Breast epithelium (tissue), 4 donors: ENCODE measurements at regions of chr7 and their contacts with region 1.

Region 1: GRCh38 chr7:70849580-70850235 is 282.2 kb upstream of the GALNT17 start:
- DNase-seq: no peak
- H3K4me3 ChIP-seq: no peak overlapping the region
- H3K27ac ChIP-seq: no peak overlapping the region
- H3K4me1 ChIP-seq: no peaks in the 10 kb centered on the region
- H3K27me3 ChIP-seq: no peaks in the 10 kb centered on the region
- CTCF ChIP-seq: no peak
- POLR2A ChIP-seq: no peak

Region 2: DNA sequence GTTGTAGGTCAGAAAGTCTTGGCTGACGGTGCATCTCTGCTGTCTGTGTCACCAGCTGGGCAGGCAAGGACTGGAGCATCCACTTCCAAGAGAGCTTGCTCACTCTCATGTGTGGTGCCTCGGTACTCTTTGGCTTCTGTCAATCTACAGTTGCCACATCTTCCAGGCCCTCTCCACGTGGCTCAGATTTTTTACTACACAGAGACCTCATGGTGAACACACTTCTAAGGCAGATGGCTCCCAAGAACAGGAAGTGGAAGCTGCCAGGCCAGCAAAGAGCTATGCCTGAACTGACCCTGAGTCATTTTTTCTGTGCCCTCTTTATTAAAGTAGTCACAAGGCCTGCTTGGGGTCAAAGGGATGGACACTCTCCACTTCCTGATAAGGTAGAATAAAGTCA is 1603.0 kb before region 1 on chr7:
- intact Hi-C with region 1: loop called (anchors 10 kb)
- DNase-seq: no peak
- H3K4me3 ChIP-seq: no peak overlapping the region
- H3K27ac ChIP-seq: no peak overlapping the region
- H3K4me1 ChIP-seq: no peaks in the 10 kb centered on the region
- H3K27me3 ChIP-seq: no peaks in the 10 kb centered on the region
- CTCF ChIP-seq: no peak
- POLR2A ChIP-seq: no peak

Region 3: GRCh38 chr7:70052691-70053090 is 797.0 kb before region 1 on chr7:
- intact Hi-C with region 1: no loop called
- DNase-seq: no peak
- H3K4me3 ChIP-seq: no peak overlapping the region
- H3K27ac ChIP-seq: no peak overlapping the region
- H3K4me1 ChIP-seq: no peaks in the 10 kb centered on the region
- H3K27me3 ChIP-seq: no peaks in the 10 kb centered on the region
- CTCF ChIP-seq: no peak
- POLR2A ChIP-seq: no peak